ENCODE measurements at regions of chr3 and their contacts with region 1.

Region 1: GRCh38 chr3:59575113-59576001 is 525.5 kb upstream of the CFAP20DC start:
- DNase-seq: peak; percentile 75 to 89 (median 82)
- ATAC-seq: peak; percentile 72 to 84 (median 81)
- H3K4me3 ChIP-seq: no peak overlapping the region
- H3K27ac ChIP-seq: no peak overlapping the region
- H3K4me1 ChIP-seq: peaks cover 0 to 13% (median 0%) of the 10 kb centered on the region in 12 donors
- H3K27me3 ChIP-seq: no peaks in the 10 kb centered on the region
- CTCF ChIP-seq: peak; percentile 93 to 98 (median 94)
- POLR2A ChIP-seq: no peak

Region 2: DNA sequence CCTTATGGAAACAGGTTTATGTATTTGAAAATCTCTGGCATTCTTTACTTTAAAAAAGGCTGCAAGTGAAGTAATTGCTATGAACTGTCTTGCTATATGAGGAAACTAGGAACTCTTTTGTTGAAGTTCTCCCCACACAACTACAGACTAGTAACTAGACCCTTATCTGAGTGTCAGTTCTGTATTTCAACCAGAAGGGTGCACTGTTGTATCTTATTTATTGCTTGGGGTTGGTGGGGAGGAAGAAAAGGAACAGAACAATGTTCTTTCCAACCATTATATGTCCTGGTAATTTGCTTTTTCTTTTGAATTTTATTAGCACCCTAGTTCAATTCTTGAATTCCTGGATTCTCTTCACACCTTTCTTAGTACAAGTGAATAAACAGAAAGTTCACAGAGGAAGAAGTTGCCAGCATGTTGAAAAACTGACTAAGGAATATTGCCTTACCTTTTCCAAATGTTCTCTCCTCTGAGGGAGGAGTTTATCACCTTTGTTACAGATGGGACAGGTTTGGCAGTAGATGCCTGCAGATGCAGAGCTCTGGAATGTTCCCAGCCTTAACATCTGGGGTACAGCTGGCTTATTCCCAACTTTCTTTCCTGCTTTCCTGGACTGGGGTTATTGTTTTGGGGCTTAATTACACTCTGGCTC is 363.1 kb before region 1 on chr3:
- intact Hi-C with region 1: loop called in 5 of 10 experiments (anchors 5 to 10 kb)
- DNase-seq: no peak
- ATAC-seq: peak in 3 of 4 donors; percentile 65 to 79 (median 77)
- H3K4me3 ChIP-seq: no peak overlapping the region
- H3K27ac ChIP-seq: no peak overlapping the region
- H3K4me1 ChIP-seq: peaks cover 0 to 3% (median 0%) of the 10 kb centered on the region in 12 donors
- H3K27me3 ChIP-seq: peaks cover 0 to 5% (median 0%) of the 10 kb centered on the region in 9 donors
- CTCF ChIP-seq: peak; percentile 46 to 68 (median 63)
- POLR2A ChIP-seq: no peak

Region 3: DNA sequence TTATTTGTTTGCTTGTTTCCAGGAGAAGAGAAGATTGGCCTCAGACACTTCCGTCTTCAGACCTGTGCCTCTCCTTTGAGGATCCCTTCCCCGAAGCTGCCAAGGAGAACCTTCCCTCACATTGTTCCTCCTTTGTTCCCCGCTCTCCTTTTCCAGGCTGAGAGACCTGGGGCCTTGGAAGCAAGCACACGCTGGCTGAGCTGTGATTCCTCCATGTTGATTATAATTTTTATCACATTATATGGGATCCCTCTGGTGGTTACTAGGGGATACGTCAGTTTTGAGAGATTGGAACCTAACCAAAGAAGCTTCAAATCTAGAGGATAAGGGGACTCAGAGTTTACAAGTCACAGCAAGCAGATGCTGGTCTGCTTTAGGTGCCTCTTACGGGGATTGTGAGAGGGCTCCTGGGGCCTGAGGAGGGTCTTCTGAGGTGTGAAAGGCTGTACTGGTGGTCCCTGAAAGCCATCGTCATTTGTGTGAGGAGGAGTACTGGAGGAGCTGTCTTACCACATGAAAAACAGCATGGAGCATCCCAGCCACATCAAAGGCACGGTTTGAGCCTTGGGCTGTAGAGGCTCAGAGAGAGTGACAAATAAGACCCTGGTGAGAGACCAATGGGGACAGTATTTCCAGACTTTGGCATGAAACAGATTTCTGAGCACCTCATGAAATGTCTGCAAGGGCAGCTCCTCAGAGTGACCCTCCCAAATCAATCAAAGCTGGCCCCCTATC is 234.5 kb after region 1 on chr3:
- intact Hi-C with region 1: loop called in 1 of 10 experiments (anchors 5 kb)
- DNase-seq: no peak
- ATAC-seq: peak in 1 of 4 donors; percentile 64
- H3K4me3 ChIP-seq: no peak overlapping the region
- H3K27ac ChIP-seq: no peak overlapping the region
- H3K4me1 ChIP-seq: peaks cover 0 to 26% (median 0%) of the 10 kb centered on the region in 12 donors
- H3K27me3 ChIP-seq: no peaks in the 10 kb centered on the region
- CTCF ChIP-seq: peak in 9 of 12 donors; percentile 17 to 48 (median 32)
- POLR2A ChIP-seq: no peak